Sigmoid colon (tissue), 7 donors: ENCODE measurements at regions of chr5 and their contacts with region 1.

Region 1: DNA sequence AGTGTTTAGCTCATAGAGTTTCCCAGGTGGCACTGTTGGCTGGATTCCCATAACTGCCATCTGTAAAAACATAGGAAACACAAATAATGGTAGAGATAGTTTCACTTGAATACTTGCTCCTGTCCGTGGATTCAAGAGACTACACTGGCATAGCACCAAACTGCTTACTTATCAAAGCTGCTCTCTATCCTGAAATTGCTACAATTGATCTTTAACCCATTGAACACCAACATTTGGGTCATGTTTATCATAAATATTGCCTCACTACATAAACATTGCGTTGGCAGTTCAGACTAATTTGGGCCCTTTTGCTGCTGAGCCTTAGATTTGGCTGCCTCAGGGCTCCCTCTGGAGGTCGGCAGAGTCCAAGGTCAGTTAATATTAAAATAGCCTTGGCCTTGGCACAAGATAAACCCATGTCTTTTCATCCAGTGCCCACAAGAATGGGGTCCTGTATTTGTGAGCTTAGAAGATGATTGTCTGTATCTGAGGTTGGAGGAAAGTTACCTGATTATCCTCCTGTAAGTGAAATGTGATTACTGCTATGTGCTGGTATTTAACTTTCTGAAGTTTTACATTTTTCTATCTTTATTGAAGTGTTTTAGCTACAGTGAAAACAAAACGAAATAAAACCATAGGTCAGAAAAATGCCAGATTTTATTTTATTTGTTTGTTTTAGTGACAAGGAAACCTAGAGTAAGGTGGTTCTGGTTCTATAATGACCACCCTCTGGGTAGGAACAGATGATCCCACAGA is 4.0 kb upstream of the RANBP3L start:
- DNase-seq: peak; percentile 66
- H3K4me3 ChIP-seq: no peak overlapping the region
- H3K27ac ChIP-seq: no peak overlapping the region
- H3K4me1 ChIP-seq: peaks cover 0 to 26% (median 23%) of the 10 kb centered on the region in 4 donors
- H3K27me3 ChIP-seq: no peaks in the 10 kb centered on the region
- CTCF ChIP-seq: peak; percentile 40 to 73 (median 52)
- EP300 ChIP-seq: no peak
- POLR2A ChIP-seq: no peak

Region 2: GRCh38 chr5:36006163-36006562 is 299.6 kb before region 1 on chr5:
- intact Hi-C with region 1: no loop called
- DNase-seq: no peak
- H3K4me3 ChIP-seq: no peak overlapping the region
- H3K27ac ChIP-seq: no peak overlapping the region
- H3K4me1 ChIP-seq: no peaks in the 10 kb centered on the region
- H3K27me3 ChIP-seq: no peaks in the 10 kb centered on the region
- CTCF ChIP-seq: no peak
- EP300 ChIP-seq: no peak
- POLR2A ChIP-seq: no peak

Region 3: DNA sequence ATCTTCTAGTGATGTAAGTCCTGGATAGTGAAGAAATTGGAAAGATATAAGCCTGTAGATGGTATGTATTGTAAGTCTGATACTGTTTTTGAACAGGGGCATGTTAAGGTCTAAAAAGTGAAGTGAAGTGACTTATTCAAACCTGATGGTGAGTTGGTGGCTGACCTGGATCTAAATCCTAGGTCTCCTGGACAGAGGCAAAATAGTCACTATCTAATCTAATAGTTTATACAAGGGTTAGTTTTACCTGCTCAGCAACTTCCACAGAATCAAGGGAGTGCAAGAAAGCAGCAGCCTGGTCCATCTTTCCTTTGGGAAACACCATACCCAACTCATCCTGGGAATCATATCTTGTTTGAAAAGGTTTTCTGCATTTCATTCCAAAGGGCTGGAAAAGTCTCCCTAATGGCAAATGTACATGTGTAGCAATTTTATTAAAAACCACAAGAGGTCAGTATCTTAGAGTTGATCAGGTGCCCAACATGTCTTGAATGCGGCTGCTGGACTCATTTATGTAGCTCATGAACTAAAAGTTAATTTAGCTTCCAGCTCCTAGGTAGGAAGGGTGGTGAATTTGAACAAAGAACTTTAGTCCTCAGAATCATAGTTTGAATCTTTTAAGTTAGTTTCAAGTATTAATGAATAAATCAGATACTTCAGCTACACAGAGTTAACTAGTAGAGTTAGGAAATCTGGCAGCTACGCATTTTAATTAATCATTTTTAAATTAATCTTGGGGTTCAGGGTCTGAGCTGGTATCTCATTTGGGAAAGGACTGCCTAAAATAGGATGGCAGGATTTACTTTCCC is 127.8 kb before region 1 on chr5:
- intact Hi-C with region 1: loop called (anchors 2 kb)
- DNase-seq: no peak
- H3K4me3 ChIP-seq: no peak overlapping the region
- H3K27ac ChIP-seq: no peak overlapping the region
- H3K4me1 ChIP-seq: no peaks in the 10 kb centered on the region
- H3K27me3 ChIP-seq: no peaks in the 10 kb centered on the region
- CTCF ChIP-seq: peak; percentile 11 to 59 (median 37)
- EP300 ChIP-seq: no peak
- POLR2A ChIP-seq: no peak

Region 4: GRCh38 chr5:36241631-36242533 is 63.9 kb before region 1 on chr5 and contains the start of gene NADK2:
- intact Hi-C with region 1: loop called (anchors 10 kb)
- DNase-seq: peak; percentile 98
- H3K4me3 ChIP-seq: peak within 1 kb of the TSS; percentile 90 to 98 (median 94)
- H3K27ac ChIP-seq: peak within 1 kb of the TSS; percentile 99 to 100 (median 99)
- H3K4me1 ChIP-seq: peaks cover 0 to 47% (median 37%) of the 10 kb centered on the region in 4 donors
- H3K27me3 ChIP-seq: no peaks in the 10 kb centered on the region
- CTCF ChIP-seq: peak; percentile 49 to 61 (median 54)
- EP300 ChIP-seq: peak in 2 of 4 donors; percentile 24 to 39
- POLR2A ChIP-seq: peak; percentile 51 to 54
- total RNA-seq, gene NADK2: 39.6 to 57.9 (median 43.1) TPM

Region 5: DNA sequence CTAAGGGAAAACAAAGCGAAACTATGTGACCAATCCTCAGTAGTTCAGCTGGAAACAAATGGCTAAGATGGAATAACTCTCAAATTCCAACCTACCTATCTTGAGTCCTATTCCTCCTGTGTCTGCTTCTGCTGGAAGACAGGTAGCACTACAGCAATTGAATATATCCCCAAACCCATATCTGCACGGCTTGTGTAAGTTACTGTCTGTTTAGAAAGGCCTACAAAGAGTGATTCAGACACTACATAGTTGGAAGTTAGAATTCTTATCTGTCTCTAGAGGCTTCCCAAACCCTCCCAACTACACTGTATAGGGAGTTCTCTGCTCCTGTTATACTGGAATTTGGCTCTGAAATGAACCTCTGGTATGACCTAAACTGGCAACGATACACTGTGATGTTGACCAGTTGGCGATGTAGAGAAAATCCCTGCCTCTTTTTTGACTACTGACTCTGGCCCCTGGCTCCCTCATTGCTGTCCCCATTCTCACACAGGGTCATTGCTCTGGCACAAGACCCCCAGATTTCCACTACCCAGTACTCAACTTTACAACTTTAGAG is 41.5 kb before region 1 on chr5:
- intact Hi-C with region 1: loop called (anchors 1 kb)
- DNase-seq: no peak
- H3K4me3 ChIP-seq: no peak overlapping the region
- H3K27ac ChIP-seq: no peak overlapping the region
- H3K4me1 ChIP-seq: no peaks in the 10 kb centered on the region
- H3K27me3 ChIP-seq: no peaks in the 10 kb centered on the region
- CTCF ChIP-seq: no peak
- EP300 ChIP-seq: no peak
- POLR2A ChIP-seq: no peak

Region 6: GRCh38 chr5:36355513-36355912 is 49.8 kb after region 1 on chr5:
- intact Hi-C with region 1: no loop called
- DNase-seq: no peak
- H3K4me3 ChIP-seq: no peak overlapping the region
- H3K27ac ChIP-seq: no peak overlapping the region
- H3K4me1 ChIP-seq: peaks cover 0 to 20% (median 0%) of the 10 kb centered on the region in 4 donors
- H3K27me3 ChIP-seq: no peaks in the 10 kb centered on the region
- CTCF ChIP-seq: no peak
- EP300 ChIP-seq: no peak
- POLR2A ChIP-seq: no peak

Region 7: DNA sequence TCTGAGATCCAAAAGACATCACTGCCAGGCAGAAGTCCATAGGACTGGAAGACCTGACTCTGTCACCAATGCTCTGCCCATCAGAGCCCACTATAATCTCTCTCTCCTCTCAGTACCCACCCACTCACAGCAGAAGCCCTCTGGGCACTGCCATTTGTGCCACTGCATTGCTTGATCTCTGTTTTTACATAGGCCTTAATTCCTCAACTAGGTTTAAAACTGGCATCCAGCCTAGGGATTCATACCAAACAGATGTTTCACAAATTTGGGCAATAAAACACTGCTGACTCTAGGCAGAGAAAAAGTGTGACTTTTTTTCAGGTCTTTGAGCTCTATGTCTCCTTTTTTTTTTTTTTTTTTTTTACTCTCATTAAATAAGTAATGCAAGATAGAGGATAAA is 87.1 kb after region 1 on chr5:
- intact Hi-C with region 1: loop called (anchors 5 kb)
- DNase-seq: no peak
- H3K4me3 ChIP-seq: no peak overlapping the region
- H3K27ac ChIP-seq: peak overlapping the region; percentile 40 to 73 (median 70)
- H3K4me1 ChIP-seq: peaks cover 0 to 43% (median 35%) of the 10 kb centered on the region in 4 donors
- H3K27me3 ChIP-seq: no peaks in the 10 kb centered on the region
- CTCF ChIP-seq: no peak
- EP300 ChIP-seq: no peak
- POLR2A ChIP-seq: no peak

Region 8: DNA sequence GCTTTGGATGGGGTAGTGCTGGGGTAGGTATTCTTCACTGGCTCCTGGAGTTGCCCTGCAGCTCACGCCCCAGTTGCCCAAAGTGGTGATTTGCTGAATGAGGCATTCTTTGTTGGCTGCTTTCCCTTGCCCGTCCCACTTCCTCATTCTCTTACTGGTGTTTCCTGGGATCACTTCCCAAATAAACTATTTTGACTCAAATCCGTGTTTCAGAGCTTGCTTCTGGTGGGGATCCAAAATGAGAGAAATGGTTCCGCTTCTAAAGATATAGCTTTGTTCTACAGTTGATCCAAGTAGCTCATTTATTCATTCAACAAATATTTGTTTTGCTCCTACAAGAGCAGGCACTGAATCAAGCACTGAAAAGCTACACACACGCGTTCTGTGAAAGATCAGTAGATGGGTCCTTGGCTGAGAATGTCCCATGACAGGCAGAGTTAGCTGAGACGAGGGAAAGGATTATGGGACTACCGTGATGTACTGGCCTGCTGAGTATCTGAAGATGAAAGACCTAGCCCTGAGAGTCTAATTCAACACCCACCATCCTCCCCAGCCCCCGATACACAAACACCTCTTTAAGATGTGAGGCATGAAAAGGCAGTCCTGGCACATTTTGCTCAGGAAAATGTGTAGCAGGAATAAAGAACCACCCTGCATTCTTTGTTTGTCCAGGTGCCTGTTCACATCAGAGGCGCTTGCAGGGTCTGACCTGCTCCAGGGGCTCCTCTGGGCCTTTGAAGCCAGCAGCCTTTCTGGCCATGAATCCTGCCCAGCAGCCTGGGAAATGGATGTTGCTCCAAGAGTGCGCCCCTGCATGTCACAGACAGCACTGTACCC is 139.1 kb after region 1 on chr5:
- intact Hi-C with region 1: no loop called
- DNase-seq: no peak
- H3K4me3 ChIP-seq: no peak overlapping the region
- H3K27ac ChIP-seq: no peak overlapping the region
- H3K4me1 ChIP-seq: no peaks in the 10 kb centered on the region
- H3K27me3 ChIP-seq: no peaks in the 10 kb centered on the region
- CTCF ChIP-seq: no peak
- EP300 ChIP-seq: no peak
- POLR2A ChIP-seq: no peak